ENCODE measurements at regions of chr12 and their contacts with region 1.

Region 1: GRCh38 chr12:17763366-17763765 is 326.6 kb downstream of the RERGL start:
- DNase-seq: no peak
- H3K4me3 Mint-ChIP-seq: no peak overlapping the region
- H3K27ac Mint-ChIP-seq: no peak overlapping the region
- H3K4me1 Mint-ChIP-seq: no peaks in the 10 kb centered on the region
- H3K27me3 Mint-ChIP-seq: no peaks in the 10 kb centered on the region

Region 2: GRCh38 chr12:17695495-17695894 is 67.9 kb before region 1 on chr12:
- intact Hi-C with region 1: no loop called
- DNase-seq: no peak
- H3K4me3 Mint-ChIP-seq: no peak overlapping the region
- H3K27ac Mint-ChIP-seq: no peak overlapping the region
- H3K4me1 Mint-ChIP-seq: no peaks in the 10 kb centered on the region
- H3K27me3 Mint-ChIP-seq: no peaks in the 10 kb centered on the region

Region 3: GRCh38 chr12:17853054-17853453 is 89.7 kb after region 1 on chr12:
- intact Hi-C with region 1: loop called (anchors 2 kb)
- DNase-seq: no peak
- H3K4me3 Mint-ChIP-seq: no peak overlapping the region
- H3K27ac Mint-ChIP-seq: no peak overlapping the region
- H3K4me1 Mint-ChIP-seq: no peaks in the 10 kb centered on the region
- H3K27me3 Mint-ChIP-seq: no peaks in the 10 kb centered on the region

Region 4: DNA sequence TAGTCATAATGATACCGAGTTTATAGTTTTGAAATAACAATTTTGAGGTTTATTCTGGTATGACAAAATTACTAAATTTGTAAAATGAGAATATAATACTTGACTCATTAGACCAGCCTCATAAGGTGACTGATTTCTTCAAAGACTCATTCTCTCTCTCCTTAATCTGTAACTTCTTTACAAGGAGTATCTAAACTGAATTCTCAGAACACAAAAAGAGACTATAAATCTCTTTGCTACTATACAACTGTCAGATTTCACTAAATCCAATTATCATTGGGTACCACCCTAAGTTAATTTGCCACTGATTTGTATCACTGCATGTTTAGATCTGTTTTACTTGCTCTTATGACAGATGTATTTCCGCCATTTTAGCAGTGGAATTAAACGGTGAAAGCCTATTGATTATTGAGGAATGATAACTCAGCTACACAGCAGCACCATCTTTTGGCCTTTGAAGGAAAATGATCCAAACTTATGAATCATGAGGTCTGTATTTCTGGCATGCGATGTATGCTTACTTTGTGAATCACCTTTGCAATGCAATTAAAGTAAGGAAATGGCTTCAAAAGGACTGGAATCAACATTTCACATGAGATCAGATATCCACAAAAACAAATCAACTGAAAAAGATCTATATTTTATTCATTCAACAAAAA is 165.5 kb after region 1 on chr12:
- intact Hi-C with region 1: no loop called
- DNase-seq: no peak
- H3K4me3 Mint-ChIP-seq: no peak overlapping the region
- H3K27ac Mint-ChIP-seq: no peak overlapping the region
- H3K4me1 Mint-ChIP-seq: no peaks in the 10 kb centered on the region
- H3K27me3 Mint-ChIP-seq: no peaks in the 10 kb centered on the region